Left ventricle myocardium superior (tissue), 1 donor: ENCODE measurements at regions of chr12 and their contacts with region 1.

Region 1: GRCh38 chr12:64610149-64610678 is at the start of gene RASSF3:
- DNase-seq: peak; percentile 88
- ATAC-seq: peak; percentile 87
- total RNA-seq, gene RASSF3: 143 TPM

Region 2: DNA sequence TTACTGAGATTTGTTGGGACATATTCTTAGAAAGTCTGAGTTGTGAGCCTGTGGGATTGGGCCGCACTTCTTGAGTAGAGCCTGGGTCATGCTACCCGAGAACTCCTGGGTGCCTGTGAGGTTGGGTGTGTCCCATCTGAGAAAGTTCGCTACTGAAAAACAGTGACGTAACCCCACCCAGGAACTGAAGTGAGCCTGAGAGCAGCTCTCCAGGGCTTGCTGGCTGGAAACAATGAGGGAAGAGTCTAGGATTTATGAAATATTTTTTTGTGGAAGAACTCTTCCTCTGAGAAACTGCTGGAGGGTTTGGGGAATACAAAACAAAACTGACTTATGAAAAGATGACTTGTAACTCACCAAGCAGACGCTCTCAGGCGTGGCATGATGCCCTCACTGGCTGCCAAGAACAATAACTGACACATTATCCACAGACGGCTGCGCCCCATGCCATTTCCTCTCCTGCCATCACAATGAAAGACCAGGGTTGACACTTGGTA is 69.3 kb after region 1 on chr12:
- intact Hi-C with region 1: loop called (anchors 10 kb)
- DNase-seq: peak; percentile 85
- ATAC-seq: peak; percentile 60